ENCODE measurements at regions of chr5 and their contacts with region 1.

Region 1: GRCh38 chr5:152505442-152506042 is 100.5 kb upstream of the NMUR2 start:
- DNase-seq: peak; percentile 51
- H3K4me3 ChIP-seq: no peak overlapping the region
- H3K27ac ChIP-seq: no peak overlapping the region
- H3K4me1 ChIP-seq: no peaks in the 10 kb centered on the region
- H3K27me3 ChIP-seq: no peaks in the 10 kb centered on the region
- CTCF ChIP-seq: peak; percentile 56 to 67

Region 2: DNA sequence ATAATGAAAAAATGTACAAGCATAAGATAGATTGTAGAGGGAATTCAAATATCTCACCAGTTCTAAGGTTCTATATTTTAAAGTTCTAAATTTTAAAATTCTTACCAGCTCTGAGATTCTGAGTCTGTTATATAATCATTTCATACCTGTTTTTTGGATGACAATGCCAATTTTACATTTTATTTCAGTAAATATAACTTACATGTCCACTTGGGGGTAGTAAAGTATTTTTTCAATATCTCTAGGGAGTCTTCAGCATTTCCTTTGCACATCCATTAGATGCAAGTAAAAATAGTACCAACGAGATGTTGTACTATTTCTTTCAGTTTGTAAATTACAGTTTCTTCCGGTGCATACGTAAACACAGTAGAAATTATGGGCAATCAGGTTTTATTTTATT is 126.2 kb before region 1 on chr5:
- CTCF ChIA-PET with region 1: no interaction called
- dilution Hi-C with region 1: no loop called
- in situ Hi-C with region 1: no loop called
- intact Hi-C with region 1: loop called (anchors 1 kb)
- DNase-seq: no peak
- H3K4me3 ChIP-seq: no peak overlapping the region
- H3K27ac ChIP-seq: no peak overlapping the region
- H3K4me1 ChIP-seq: no peaks in the 10 kb centered on the region
- H3K27me3 ChIP-seq: no peaks in the 10 kb centered on the region
- CTCF ChIP-seq: no peak

Region 3: GRCh38 chr5:152542741-152543140 is 37.2 kb after region 1 on chr5:
- CTCF ChIA-PET with region 1: no interaction called
- dilution Hi-C with region 1: no loop called
- in situ Hi-C with region 1: no loop called
- intact Hi-C with region 1: no loop called
- DNase-seq: peak; percentile 47
- H3K4me3 ChIP-seq: no peak overlapping the region
- H3K27ac ChIP-seq: no peak overlapping the region
- H3K4me1 ChIP-seq: peaks cover 9% of the 10 kb centered on the region
- H3K27me3 ChIP-seq: no peaks in the 10 kb centered on the region
- CTCF ChIP-seq: no peak

Region 4: GRCh38 chr5:152688561-152689249 is 183.2 kb after region 1 on chr5:
- CTCF ChIA-PET with region 1: no interaction called
- dilution Hi-C with region 1: no loop called
- in situ Hi-C with region 1: no loop called
- intact Hi-C with region 1: no loop called
- DNase-seq: peak; percentile 92
- H3K4me3 ChIP-seq: no peak overlapping the region
- H3K27ac ChIP-seq: peak overlapping the region; percentile 20
- H3K4me1 ChIP-seq: peaks cover 25% of the 10 kb centered on the region
- H3K27me3 ChIP-seq: no peaks in the 10 kb centered on the region
- CTCF ChIP-seq: no peak